HCT116 (cell line): ENCODE measurements at regions of chr1 and their contacts with region 1.

Region 1: DNA sequence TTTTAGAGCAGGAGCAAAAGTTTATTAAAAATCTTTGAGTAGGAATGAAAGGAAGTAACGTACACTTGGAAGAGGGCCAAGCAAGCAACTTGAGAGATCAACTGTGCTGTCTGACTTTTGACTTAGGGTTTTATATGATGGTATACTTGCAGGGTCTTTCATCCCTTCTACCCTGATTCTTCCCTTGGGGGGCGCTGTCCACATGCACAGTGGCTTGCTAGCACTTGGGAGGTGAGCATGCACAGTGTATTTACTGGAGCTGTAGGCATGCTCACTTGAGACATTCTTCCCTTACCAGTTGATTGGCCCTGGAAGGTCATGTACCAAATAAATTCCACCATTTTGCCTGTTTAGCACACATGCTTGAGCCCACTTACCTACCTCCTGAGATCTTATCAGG is 1001.3 kb upstream of the ADGRL2 start:
- DNase-seq: no peak
- ATAC-seq: no peak
- H3K4me3 ChIP-seq: no peak overlapping the region
- H3K27ac ChIP-seq: no peak overlapping the region
- H3K4me1 ChIP-seq: no peaks in the 10 kb centered on the region
- H3K27me3 ChIP-seq: no peaks in the 10 kb centered on the region
- CTCF ChIP-seq: no peak
- POLR2A ChIP-seq: no peak
- RAD21 ChIP-seq: no peak

Region 2: GRCh38 chr1:81225789-81226602 is 426.5 kb after region 1 on chr1:
- CTCF ChIA-PET with region 1: no interaction called
- POLR2A ChIA-PET with region 1: no interaction called
- RAD21 ChIA-PET with region 1: no interaction called
- intact Hi-C with region 1: loop called (anchors 10 kb)
- DNase-seq: no peak
- ATAC-seq: no peak
- H3K4me3 ChIP-seq: no peak overlapping the region
- H3K27ac ChIP-seq: no peak overlapping the region
- H3K4me1 ChIP-seq: no peaks in the 10 kb centered on the region
- H3K27me3 ChIP-seq: no peaks in the 10 kb centered on the region
- CTCF ChIP-seq: no peak
- POLR2A ChIP-seq: no peak
- RAD21 ChIP-seq: no peak